ENCODE measurements at regions of chr16 and their contacts with region 1.

Region 1: GRCh38 chr16:84548971-84549844 is 44.7 kb upstream of the MEAK7 start:
- DNase-seq: peak in 7 of 10 donors; percentile 10 to 63 (median 41)
- ATAC-seq: peak; percentile 51 to 59
- H3K4me3 Mint-ChIP-seq: peak overlapping the region; percentile 85 to 94 (median 91)
- H3K27ac Mint-ChIP-seq: peak overlapping the region; percentile 95 to 100 (median 98)
- H3K4me1 Mint-ChIP-seq: peaks cover 49 to 74% (median 67%) of the 10 kb centered on the region in 4 donors
- H3K27me3 Mint-ChIP-seq: peaks cover 0 to 2% (median 0%) of the 10 kb centered on the region in 5 donors

Region 2: GRCh38 chr16:84485255-84486010 is 63.8 kb before region 1 on chr16:
- POLR2A ChIA-PET with region 1: no interaction called
- DNase-seq: peak in 1 of 10 donors; percentile 36
- ATAC-seq: no peak
- H3K4me3 Mint-ChIP-seq: no peak overlapping the region
- H3K27ac Mint-ChIP-seq: peak overlapping the region in 1 of 10 donors; percentile 34
- H3K4me1 Mint-ChIP-seq: no peaks in the 10 kb centered on the region
- H3K27me3 Mint-ChIP-seq: no peaks in the 10 kb centered on the region

Region 3: GRCh38 chr16:84518748-84519341 is 30.4 kb before region 1 on chr16:
- POLR2A ChIA-PET with region 1: interaction called, 16 read pairs
- DNase-seq: peak in 9 of 10 donors; percentile 40 to 76 (median 65)
- ATAC-seq: peak; percentile 37 to 52
- H3K4me3 Mint-ChIP-seq: peak overlapping the region; percentile 19 to 71 (median 52)
- H3K27ac Mint-ChIP-seq: peak overlapping the region; percentile 77 to 93 (median 86)
- H3K4me1 Mint-ChIP-seq: peaks cover 24 to 66% (median 60%) of the 10 kb centered on the region in 4 donors
- H3K27me3 Mint-ChIP-seq: no peaks in the 10 kb centered on the region

Region 4: DNA sequence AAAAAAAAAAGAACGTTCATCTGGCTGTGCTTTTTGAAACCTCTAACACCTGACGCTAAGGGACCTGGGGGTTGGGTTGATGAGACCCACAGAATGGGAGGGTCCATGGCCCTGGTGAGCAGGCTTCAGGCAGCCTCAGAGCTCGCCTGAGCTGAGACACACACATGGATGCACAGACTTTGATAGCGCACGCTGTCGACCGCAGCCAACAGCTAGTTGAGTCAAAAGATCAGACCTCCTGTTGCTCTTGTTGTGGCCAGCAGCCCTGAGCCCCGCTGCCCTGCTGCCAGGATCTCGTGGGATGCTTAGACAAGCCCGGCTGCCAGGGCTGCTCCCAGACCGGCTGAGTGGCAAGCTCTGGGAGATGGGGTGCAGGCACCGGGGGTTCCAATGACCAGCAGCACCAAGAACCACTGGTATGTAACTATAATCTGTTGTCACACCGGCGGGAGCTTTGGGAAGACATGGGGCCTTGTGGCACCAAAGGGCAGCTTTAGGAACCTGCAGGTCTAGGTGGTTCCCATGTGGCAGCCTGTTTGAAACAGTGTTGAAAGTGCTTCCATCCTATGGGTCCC is 24.8 kb before region 1 on chr16:
- POLR2A ChIA-PET with region 1: interaction called, 16 read pairs
- DNase-seq: peak in 1 of 10 donors; percentile 50
- ATAC-seq: peak; percentile 42 to 76
- H3K4me3 Mint-ChIP-seq: peak overlapping the region in 3 of 10 donors; percentile 30 to 65 (median 39)
- H3K27ac Mint-ChIP-seq: peak overlapping the region in 6 of 10 donors; percentile 37 to 76 (median 62)
- H3K4me1 Mint-ChIP-seq: peaks cover 11 to 38% (median 19%) of the 10 kb centered on the region in 4 donors
- H3K27me3 Mint-ChIP-seq: no peaks in the 10 kb centered on the region

Region 5: DNA sequence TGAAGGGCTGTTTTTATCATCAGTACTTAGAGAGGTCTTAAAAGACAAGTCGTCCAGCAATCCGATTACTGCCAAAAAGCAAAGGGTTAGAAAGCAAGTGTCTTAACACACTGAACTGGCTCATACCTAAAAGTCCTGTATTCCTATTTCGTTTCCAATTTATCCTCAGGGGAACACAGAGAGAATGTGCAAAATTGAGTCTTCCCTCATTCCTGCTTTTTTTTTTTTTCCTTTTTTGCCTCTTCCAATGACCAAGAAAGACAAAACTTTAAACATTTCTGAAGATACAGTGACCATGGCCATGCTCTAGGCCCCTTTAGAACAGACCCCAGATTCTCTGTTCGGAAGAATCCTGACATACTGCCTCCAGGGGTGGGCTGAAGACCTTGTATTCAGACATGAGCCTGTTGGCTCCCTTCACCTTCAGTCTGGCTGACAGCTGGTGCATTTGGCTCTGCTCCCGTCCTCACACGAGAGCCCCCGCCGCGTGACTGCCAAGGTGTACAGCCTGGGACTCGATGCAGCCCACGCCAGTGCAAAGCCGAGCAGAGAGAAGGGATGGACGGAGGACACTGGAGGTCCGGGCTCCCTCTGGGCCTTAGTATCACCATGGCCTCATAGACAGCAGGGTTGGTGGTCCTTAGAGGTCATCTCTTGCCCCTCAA is 21.7 kb after region 1 on chr16:
- POLR2A ChIA-PET with region 1: no interaction called
- DNase-seq: no peak
- ATAC-seq: no peak
- H3K4me3 Mint-ChIP-seq: no peak overlapping the region
- H3K27ac Mint-ChIP-seq: peak overlapping the region in 9 of 10 donors; percentile 15 to 81 (median 57)
- H3K4me1 Mint-ChIP-seq: peaks cover 21 to 58% (median 46%) of the 10 kb centered on the region in 4 donors
- H3K27me3 Mint-ChIP-seq: no peaks in the 10 kb centered on the region

Region 6: GRCh38 chr16:84599521-84600202 is 50.5 kb after region 1 on chr16:
- POLR2A ChIA-PET with region 1: interaction called, 26 read pairs
- DNase-seq: peak in 8 of 10 donors; percentile 26 to 75 (median 41)
- ATAC-seq: peak; percentile 49 to 51
- H3K4me3 Mint-ChIP-seq: peak overlapping the region; percentile 79 to 96 (median 89)
- H3K27ac Mint-ChIP-seq: peak overlapping the region; percentile 89 to 99 (median 96)
- H3K4me1 Mint-ChIP-seq: peaks cover 53 to 91% (median 88%) of the 10 kb centered on the region in 4 donors
- H3K27me3 Mint-ChIP-seq: no peaks in the 10 kb centered on the region

Region 7: GRCh38 chr16:84656649-84657048 is 107.4 kb after region 1 on chr16:
- POLR2A ChIA-PET with region 1: no interaction called
- DNase-seq: peak in 1 of 10 donors; percentile 22
- ATAC-seq: peak; percentile 11 to 33
- H3K4me3 Mint-ChIP-seq: peak overlapping the region in 9 of 10 donors; percentile 16 to 81 (median 61)
- H3K27ac Mint-ChIP-seq: peak overlapping the region in 9 of 10 donors; percentile 15 to 92 (median 60)
- H3K4me1 Mint-ChIP-seq: peaks cover 17 to 85% (median 74%) of the 10 kb centered on the region in 4 donors
- H3K27me3 Mint-ChIP-seq: no peaks in the 10 kb centered on the region

Measured in naive thymus-derived CD8-positive, alpha-beta T cell (primary cell).